ENCODE measurements at regions of chrX and their contacts with region 1.

Region 1: GRCh38 chrX:65601530-65602220 is 65.8 kb upstream of the MSN start:
- DNase-seq: peak; percentile 67
- H3K4me3 Mint-ChIP-seq: peak overlapping the region; percentile 48
- H3K27ac Mint-ChIP-seq: peak overlapping the region; percentile 94
- H3K4me1 Mint-ChIP-seq: peaks cover 69% of the 10 kb centered on the region
- H3K27me3 Mint-ChIP-seq: no peaks in the 10 kb centered on the region

Region 2: DNA sequence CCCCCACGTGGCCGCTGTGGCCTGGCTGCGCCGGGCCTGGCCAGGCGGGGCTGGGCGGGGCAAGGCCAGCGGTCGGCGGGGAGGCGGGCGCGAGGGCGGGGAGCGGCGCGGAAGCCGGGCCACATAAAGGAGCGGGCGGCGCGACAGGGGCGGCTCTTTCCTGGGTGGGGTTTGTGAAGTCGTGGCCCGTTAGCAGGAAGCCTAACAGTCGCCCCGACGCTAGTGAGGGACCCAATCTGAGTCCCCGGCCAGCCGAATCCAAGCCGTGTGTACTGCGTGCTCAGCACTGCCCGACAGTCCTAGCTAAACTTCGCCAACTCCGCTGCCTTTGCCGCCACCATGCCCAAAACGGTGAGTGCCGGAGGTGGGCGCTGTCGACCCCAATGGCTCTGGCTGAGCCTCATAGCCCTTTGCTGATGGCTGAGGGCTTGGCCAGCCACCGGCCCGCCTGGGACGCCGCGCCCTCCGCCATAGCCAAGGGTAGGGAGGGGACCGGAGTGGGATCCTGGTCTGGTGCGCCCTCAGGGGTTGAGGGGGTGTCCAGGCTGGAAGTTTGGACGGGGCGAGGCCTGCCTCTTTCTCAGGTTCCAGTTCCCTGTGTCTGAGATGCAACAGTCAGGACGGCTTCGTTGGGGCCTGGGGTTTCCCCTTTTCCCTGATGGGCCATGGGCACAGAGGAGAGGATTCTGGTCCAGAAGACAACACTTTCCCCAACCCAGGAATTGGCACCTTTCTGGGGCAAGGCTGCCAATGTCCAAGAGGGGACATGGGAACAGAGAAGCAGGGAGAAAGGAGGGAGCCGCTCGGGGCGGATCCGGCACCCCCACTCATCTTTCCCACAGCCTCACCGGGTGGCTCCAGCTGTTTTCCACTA is 66.1 kb after region 1 on chrX and contains the start of gene MSN:
- CTCF ChIA-PET with region 1: interaction called, 6 read pairs
- POLR2A ChIA-PET with region 1: interaction called, 50 read pairs
- DNase-seq: peak; percentile 82
- H3K4me3 Mint-ChIP-seq: peak within 1 kb of the TSS; percentile 91
- H3K27ac Mint-ChIP-seq: peak within 1 kb of the TSS; percentile 89
- H3K4me1 Mint-ChIP-seq: peaks cover 38% of the 10 kb centered on the region
- H3K27me3 Mint-ChIP-seq: no peaks in the 10 kb centered on the region
- total RNA-seq, gene MSN: 632 to 637 TPM

Region 3: GRCh38 chrX:65674204-65674893 is 72.7 kb after region 1 on chrX:
- CTCF ChIA-PET with region 1: interaction called, 9 read pairs
- POLR2A ChIA-PET with region 1: interaction called, 50 read pairs
- DNase-seq: peak; percentile 34
- H3K4me3 Mint-ChIP-seq: peak overlapping the region; percentile 91
- H3K27ac Mint-ChIP-seq: peak overlapping the region; percentile 83
- H3K4me1 Mint-ChIP-seq: peaks cover 73% of the 10 kb centered on the region
- H3K27me3 Mint-ChIP-seq: no peaks in the 10 kb centered on the region

Region 4: GRCh38 chrX:66004928-66005829 is 403.5 kb after region 1 on chrX:
- CTCF ChIA-PET with region 1: no interaction called
- POLR2A ChIA-PET with region 1: no interaction called
- DNase-seq: no peak
- H3K4me3 Mint-ChIP-seq: peak overlapping the region; percentile 28
- H3K27ac Mint-ChIP-seq: peak overlapping the region; percentile 90
- H3K4me1 Mint-ChIP-seq: peaks cover 45% of the 10 kb centered on the region
- H3K27me3 Mint-ChIP-seq: no peaks in the 10 kb centered on the region

Measured in activated CD4-positive, alpha-beta memory T cell treated with anti-CD3 and anti-CD28 coated beads, Interleukin-2, amount 10 ng/mL, durations not matched to agents 7 days and 5 days (primary cell).